ENCODE measurements at regions of chr6 and their contacts with region 1.

Region 1: GRCh38 chr6:42118162-42119001 is 24.0 kb downstream of the C6orf132 start:
- DNase-seq: peak; percentile 94
- H3K4me3 Mint-ChIP-seq: peak overlapping the region; percentile 11
- H3K27ac Mint-ChIP-seq: peak overlapping the region; percentile 90
- H3K4me1 Mint-ChIP-seq: peaks cover 68% of the 10 kb centered on the region
- H3K27me3 Mint-ChIP-seq: no peaks in the 10 kb centered on the region
- CTCF ChIP-seq: no peak

Region 2: DNA sequence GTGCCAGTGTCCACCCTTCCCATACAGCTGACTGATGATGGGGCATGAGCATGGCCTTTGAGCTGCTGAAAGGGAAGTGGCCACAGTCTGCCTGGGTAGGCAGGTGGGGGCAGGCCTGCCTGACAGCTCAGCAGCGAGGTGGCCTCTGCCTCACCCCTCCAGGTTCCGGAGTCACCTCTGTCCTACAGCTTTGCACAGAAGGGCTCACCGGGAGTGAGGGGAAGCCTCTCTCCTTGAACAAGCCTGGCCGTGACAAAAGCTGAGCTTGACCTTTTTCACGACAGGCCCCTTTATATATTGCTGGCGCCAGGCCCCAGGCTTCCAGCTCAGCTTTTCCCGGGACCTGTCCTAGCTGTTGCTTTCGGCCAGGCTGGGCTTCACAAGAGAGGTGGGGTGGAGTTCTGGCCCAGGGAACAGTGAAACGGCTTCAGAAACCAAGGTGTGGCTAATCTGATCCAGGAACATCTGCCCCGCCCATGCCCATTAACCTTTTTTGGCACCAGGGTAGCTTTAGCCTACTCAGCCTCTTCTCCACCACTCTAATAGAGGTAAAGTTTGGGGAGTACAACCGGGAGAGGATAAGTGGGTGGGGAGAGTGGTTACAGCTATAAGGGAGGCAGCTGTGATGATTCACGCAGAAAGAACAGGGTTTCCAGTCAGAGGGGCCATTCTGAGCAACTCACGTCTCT is 18.9 kb before region 1 on chr6:
- CTCF ChIA-PET with region 1: interaction called, 10 read pairs
- intact Hi-C with region 1: no loop called
- DNase-seq: peak; percentile 74
- H3K4me3 Mint-ChIP-seq: peak overlapping the region; percentile 23
- H3K27ac Mint-ChIP-seq: peak overlapping the region; percentile 78
- H3K4me1 Mint-ChIP-seq: peaks cover 63% of the 10 kb centered on the region
- H3K27me3 Mint-ChIP-seq: no peaks in the 10 kb centered on the region
- CTCF ChIP-seq: no peak

Region 3: GRCh38 chr6:42136508-42137193 is 18.3 kb after region 1 on chr6:
- CTCF ChIA-PET with region 1: interaction called, 16 read pairs
- intact Hi-C with region 1: loop called (anchors 2 kb)
- DNase-seq: peak; percentile 64
- H3K4me3 Mint-ChIP-seq: peak overlapping the region; percentile 55
- H3K27ac Mint-ChIP-seq: peak overlapping the region; percentile 79
- H3K4me1 Mint-ChIP-seq: peaks cover 74% of the 10 kb centered on the region
- H3K27me3 Mint-ChIP-seq: no peaks in the 10 kb centered on the region
- CTCF ChIP-seq: peak; percentile 36